SK-N-SH (cell line): ENCODE measurements at regions of chr17 and their contacts with region 1.

Region 1: DNA sequence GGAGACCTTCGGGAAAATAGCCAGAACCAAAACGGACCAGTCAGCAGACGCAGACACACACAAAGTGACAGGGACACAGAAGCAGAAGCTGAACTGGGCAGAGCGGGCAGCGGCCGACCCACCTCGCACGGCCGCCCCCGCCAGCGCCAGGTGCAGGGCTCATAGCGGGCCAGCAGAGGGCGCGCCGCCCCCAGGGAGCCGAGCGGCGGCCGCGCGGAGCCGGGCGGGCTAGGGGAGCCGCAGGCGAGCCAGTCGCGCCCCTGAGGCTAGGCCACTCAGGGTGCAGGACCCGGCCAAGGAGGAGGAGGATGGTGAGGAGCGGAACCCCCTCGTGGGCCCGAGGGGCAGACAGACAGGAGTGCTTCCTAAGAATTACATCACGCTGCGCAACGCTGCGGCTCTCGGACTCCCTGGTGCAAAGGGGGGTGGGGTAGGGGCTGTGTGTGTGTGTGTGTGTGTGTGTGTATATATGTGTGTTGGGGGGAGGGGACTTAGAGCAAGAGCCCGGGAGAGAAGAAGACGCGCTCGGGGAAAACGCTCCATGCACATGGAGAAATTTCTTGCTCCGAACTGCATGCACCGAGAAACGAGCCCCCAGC is 913 bp upstream of the NOG start:
- DNase-seq: peak; percentile 95
- H3K4me3 ChIP-seq: peak overlapping the region; percentile 54 to 74
- H3K27ac ChIP-seq: peak overlapping the region in 1 of 2 experiments; percentile 69; a peak in 1 of 4 replicates
- H3K4me1 ChIP-seq: peaks cover 5 to 18% of the 10 kb centered on the region in 2 experiments; a peak in 3 of 4 replicates
- H3K27me3 ChIP-seq: peaks cover 36% of the 10 kb centered on the region
- CTCF ChIP-seq: peak; percentile 98
- EP300 ChIP-seq: no peak
- RAD21 ChIP-seq: peak; percentile 81

Region 2: GRCh38 chr17:56577843-56578204 is 14.8 kb before region 1 on chr17:
- CTCF ChIA-PET with region 1: interaction called, 45 read pairs
- POLR2A ChIA-PET with region 1: no interaction called
- DNase-seq: no peak
- H3K4me3 ChIP-seq: no peak overlapping the region
- H3K27ac ChIP-seq: no peak overlapping the region
- H3K4me1 ChIP-seq: no peaks in the 10 kb centered on the region
- H3K27me3 ChIP-seq: peaks cover 62% of the 10 kb centered on the region
- CTCF ChIP-seq: no peak
- EP300 ChIP-seq: no peak
- RAD21 ChIP-seq: no peak

Region 3: GRCh38 chr17:56638591-56639051 is 46.0 kb after region 1 on chr17:
- CTCF ChIA-PET with region 1: interaction called, 15 read pairs
- POLR2A ChIA-PET with region 1: no interaction called
- DNase-seq: no peak
- H3K4me3 ChIP-seq: no peak overlapping the region
- H3K27ac ChIP-seq: no peak overlapping the region
- H3K4me1 ChIP-seq: 0 out of 4 replicates have a peak, but pooled peaks cover 0 to 7% of the 10 kb centered on the region in 2 experiments
- H3K27me3 ChIP-seq: peaks cover 4% of the 10 kb centered on the region; the same call in 1 of the 2 replicates
- CTCF ChIP-seq: no peak
- EP300 ChIP-seq: no peak
- RAD21 ChIP-seq: no peak

Region 4: GRCh38 chr17:56699186-56699895 is 106.8 kb after region 1 on chr17:
- CTCF ChIA-PET with region 1: interaction called, 11 read pairs
- POLR2A ChIA-PET with region 1: no interaction called
- DNase-seq: peak; percentile 38
- H3K4me3 ChIP-seq: peak overlapping the region; percentile 2 to 13; a peak in 2 of 4 replicates
- H3K27ac ChIP-seq: peak overlapping the region; percentile 41 to 80; a peak in 3 of 4 replicates
- H3K4me1 ChIP-seq: peaks cover 0 to 12% of the 10 kb centered on the region in 2 experiments; a peak in 1 of 4 replicates
- H3K27me3 ChIP-seq: no peaks in the 10 kb centered on the region
- CTCF ChIP-seq: no peak
- EP300 ChIP-seq: peak in 1 of 2 experiments; percentile 95; a peak in 2 of 4 replicates
- RAD21 ChIP-seq: no peak